A673 (cell line): ENCODE measurements at regions of chr2 and their contacts with region 1.

Region 1: DNA sequence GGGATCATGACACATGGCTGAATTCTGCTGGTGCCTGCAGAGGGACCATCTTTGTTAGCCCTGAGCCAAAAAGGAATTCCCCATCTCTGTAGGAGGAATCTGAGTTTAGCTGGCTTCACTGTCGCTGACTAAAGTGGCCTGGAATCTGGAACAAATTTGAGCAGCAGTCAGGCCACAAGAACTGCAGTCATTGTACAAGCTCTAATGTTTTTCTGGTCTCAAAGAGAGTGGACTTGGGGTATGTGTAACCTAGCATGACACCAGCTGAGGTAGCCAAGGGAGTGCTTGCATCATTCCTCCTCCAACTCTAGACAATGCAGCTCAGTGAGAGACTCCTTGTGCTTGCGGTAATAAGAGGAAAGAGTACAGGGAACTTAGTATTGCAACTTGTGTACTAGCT is 539.1 kb upstream of the LRRTM4 start:
- DNase-seq: no peak
- H3K4me3 ChIP-seq: no peak overlapping the region
- H3K27ac ChIP-seq: peak overlapping the region; percentile 100
- H3K4me1 ChIP-seq: peaks cover 49% of the 10 kb centered on the region
- H3K27me3 ChIP-seq: no peaks in the 10 kb centered on the region
- CTCF ChIP-seq: no peak

Region 2: GRCh38 chr2:77571545-77571944 is 489.8 kb before region 1 on chr2:
- CTCF ChIA-PET with region 1: no interaction called
- POLR2A ChIA-PET with region 1: no interaction called
- intact Hi-C with region 1: loop called (anchors 5 kb)
- DNase-seq: peak; percentile 79
- H3K4me3 ChIP-seq: no peak overlapping the region
- H3K27ac ChIP-seq: no peak overlapping the region
- H3K4me1 ChIP-seq: peaks cover 6% of the 10 kb centered on the region
- H3K27me3 ChIP-seq: peaks cover 64% of the 10 kb centered on the region
- CTCF ChIP-seq: no peak

Region 3: GRCh38 chr2:77954931-77955330 is 106.4 kb before region 1 on chr2:
- CTCF ChIA-PET with region 1: interaction called, 13 read pairs
- POLR2A ChIA-PET with region 1: no interaction called
- intact Hi-C with region 1: no loop called
- DNase-seq: no peak
- H3K4me3 ChIP-seq: no peak overlapping the region
- H3K27ac ChIP-seq: no peak overlapping the region
- H3K4me1 ChIP-seq: no peaks in the 10 kb centered on the region
- H3K27me3 ChIP-seq: no peaks in the 10 kb centered on the region
- CTCF ChIP-seq: peak; percentile 46

Region 4: DNA sequence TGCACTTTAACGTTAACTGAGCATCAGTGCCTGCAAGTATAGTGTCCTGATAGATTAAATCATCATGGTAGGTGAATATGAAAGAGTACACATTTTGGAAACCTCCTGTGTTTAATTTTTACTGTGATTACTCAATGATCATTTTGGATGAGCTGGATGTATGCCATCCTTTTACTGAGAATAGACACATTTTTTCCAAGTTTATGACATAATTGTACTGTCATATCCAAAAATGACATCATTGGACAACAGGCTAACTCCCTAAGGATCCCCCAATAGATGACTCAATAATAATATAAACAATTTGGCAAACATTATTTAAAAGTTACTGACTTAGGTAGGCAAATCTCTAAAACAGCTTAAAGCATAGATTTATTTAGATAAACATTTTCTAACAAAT is 553.4 kb after region 1 on chr2:
- CTCF ChIA-PET with region 1: no interaction called
- POLR2A ChIA-PET with region 1: no interaction called
- intact Hi-C with region 1: no loop called
- DNase-seq: no peak
- H3K4me3 ChIP-seq: no peak overlapping the region
- H3K27ac ChIP-seq: no peak overlapping the region
- H3K4me1 ChIP-seq: no peaks in the 10 kb centered on the region
- H3K27me3 ChIP-seq: no peaks in the 10 kb centered on the region
- CTCF ChIP-seq: no peak

Region 5: GRCh38 chr2:78707776-78708386 is 646.6 kb after region 1 on chr2:
- CTCF ChIA-PET with region 1: no interaction called
- POLR2A ChIA-PET with region 1: interaction called, 12 read pairs
- intact Hi-C with region 1: no loop called
- DNase-seq: peak; percentile 83
- H3K4me3 ChIP-seq: no peak overlapping the region
- H3K27ac ChIP-seq: peak overlapping the region; percentile 88
- H3K4me1 ChIP-seq: no peaks in the 10 kb centered on the region
- H3K27me3 ChIP-seq: no peaks in the 10 kb centered on the region
- CTCF ChIP-seq: no peak